PC-3 (cell line): ENCODE measurements at regions of chr9 and their contacts with region 1.

Region 1: DNA sequence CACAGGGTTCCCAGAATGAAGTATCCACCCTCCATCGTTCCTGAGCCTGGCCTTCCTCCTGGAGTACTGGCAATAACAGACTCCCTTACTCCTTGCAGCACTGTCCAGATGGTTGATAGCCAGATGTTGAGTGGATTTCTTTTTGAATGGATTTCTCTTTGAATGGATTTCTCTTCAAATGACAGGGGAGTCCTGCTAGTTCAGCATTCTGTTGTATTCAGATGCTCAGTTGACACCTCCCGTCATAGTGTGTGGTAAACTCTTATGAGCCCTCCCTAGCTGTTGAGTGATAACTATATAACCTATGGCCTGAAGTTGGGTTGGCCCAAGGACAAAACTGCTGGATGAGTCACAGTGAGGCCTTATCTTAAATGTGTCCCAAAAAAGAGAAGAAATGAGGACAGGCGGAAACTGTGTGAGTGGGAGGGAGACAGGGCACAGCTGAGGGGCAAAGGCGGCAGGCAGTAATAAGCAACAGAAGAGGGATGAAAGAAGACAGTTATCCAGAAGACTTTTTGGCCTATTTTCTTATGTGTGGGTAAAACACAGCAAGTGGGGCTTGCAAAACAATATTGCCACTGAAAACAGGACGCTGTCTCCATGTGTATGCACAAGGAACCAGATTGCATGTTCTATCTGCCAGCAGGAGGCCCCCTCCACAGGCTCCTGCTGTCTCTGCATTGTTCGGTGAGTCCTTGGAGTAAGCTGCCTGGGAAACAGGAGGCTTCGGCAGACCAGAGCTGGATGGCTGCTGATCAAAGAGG is 209.5 kb upstream of the S1PR3 start:
- DNase-seq: no peak
- ATAC-seq: no peak
- H3K4me3 ChIP-seq: no peak overlapping the region
- H3K27ac ChIP-seq: no peak overlapping the region
- H3K4me1 ChIP-seq: peaks cover 38% of the 10 kb centered on the region
- H3K27me3 ChIP-seq: no peaks in the 10 kb centered on the region
- CTCF ChIP-seq: 0 out of 2 replicates have a peak, but pooled peaks have one; percentile 18

Region 2: DNA sequence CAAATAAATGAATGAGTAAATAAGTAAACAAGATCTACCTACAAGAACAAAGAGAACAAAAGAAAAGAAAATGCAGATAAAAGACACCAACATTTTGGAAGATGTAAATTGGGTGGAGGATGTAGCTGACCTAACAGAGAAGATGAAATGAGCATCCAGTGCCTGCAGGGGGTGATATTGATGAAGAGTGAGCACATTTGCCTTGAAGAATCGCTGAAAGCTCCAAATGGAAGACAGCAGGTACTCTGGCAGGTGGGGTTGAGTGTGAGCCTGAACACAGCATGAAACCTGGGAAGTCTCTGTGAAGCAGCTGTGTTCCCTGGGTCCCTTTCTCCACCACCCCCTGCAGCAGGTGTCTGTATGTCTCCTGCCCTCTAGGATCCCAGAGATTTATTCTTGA is 121.2 kb before region 1 on chr9:
- CTCF ChIA-PET with region 1: no interaction called
- POLR2A ChIA-PET with region 1: no interaction called
- intact Hi-C with region 1: loop called (anchors 5 kb)
- DNase-seq: peak; percentile 69
- ATAC-seq: peak; percentile 45; the same call in 1 of the 2 replicates
- H3K4me3 ChIP-seq: no peak overlapping the region
- H3K27ac ChIP-seq: no peak overlapping the region
- H3K4me1 ChIP-seq: no peaks in the 10 kb centered on the region
- H3K27me3 ChIP-seq: no peaks in the 10 kb centered on the region
- CTCF ChIP-seq: peak; percentile 68

Region 3: GRCh38 chr9:88766778-88767503 is 14.9 kb before region 1 on chr9:
- CTCF ChIA-PET with region 1: no interaction called
- POLR2A ChIA-PET with region 1: no interaction called
- intact Hi-C with region 1: no loop called
- DNase-seq: peak; percentile 49
- ATAC-seq: peak; percentile 55; the same call in 1 of the 2 replicates
- H3K4me3 ChIP-seq: no peak overlapping the region; the same call in 1 of the 2 replicates
- H3K27ac ChIP-seq: peak overlapping the region; percentile 82
- H3K4me1 ChIP-seq: peaks cover 21% of the 10 kb centered on the region
- H3K27me3 ChIP-seq: no peaks in the 10 kb centered on the region
- CTCF ChIP-seq: no peak

Region 4: DNA sequence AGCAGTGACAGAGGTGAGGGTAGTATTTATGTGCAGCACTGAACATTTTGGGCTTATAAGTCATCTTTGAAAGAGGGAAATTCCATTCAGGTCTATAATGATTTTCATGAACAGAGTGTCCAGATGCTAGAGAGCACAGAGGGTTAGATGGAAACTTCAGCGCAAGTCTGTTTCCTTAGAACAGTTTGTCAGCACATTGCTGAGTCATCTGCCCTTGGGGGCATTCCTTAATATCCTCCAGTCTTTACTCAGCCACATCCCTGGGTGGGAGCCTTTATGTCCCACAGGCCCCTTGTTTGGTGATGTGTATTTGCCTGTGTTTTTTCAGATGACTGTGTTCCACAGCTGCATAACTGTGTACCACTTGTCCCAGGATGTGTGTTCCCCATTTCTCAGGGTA is 71.0 kb after region 1 on chr9:
- CTCF ChIA-PET with region 1: no interaction called
- POLR2A ChIA-PET with region 1: no interaction called
- intact Hi-C with region 1: loop called (anchors 10 kb)
- DNase-seq: peak; percentile 85
- ATAC-seq: peak; percentile 90
- H3K4me3 ChIP-seq: no peak overlapping the region
- H3K27ac ChIP-seq: no peak overlapping the region
- H3K4me1 ChIP-seq: peaks cover 12% of the 10 kb centered on the region; the same call in 1 of the 2 replicates
- H3K27me3 ChIP-seq: no peaks in the 10 kb centered on the region
- CTCF ChIP-seq: no peak

Region 5: GRCh38 chr9:88991066-88992034 is 209.5 kb after region 1 on chr9 and contains the start of gene S1PR3:
- CTCF ChIA-PET with region 1: no interaction called
- POLR2A ChIA-PET with region 1: no interaction called
- intact Hi-C with region 1: loop called (anchors 5 kb)
- DNase-seq: peak; percentile 36
- ATAC-seq: peak; percentile 76
- H3K4me3 ChIP-seq: peak within 1 kb of the TSS; percentile 92
- H3K27ac ChIP-seq: no peak within 1 kb of the TSS
- H3K4me1 ChIP-seq: peaks cover 12% of the 10 kb centered on the region; the same call in 1 of the 2 replicates
- H3K27me3 ChIP-seq: no peaks in the 10 kb centered on the region
- CTCF ChIP-seq: 0 out of 2 replicates have a peak, but pooled peaks have one; percentile 10
- total RNA-seq, gene S1PR3: 8.4 and 10.0 TPM in 2 replicates